ENCODE measurements at regions of chr2 and their contacts with region 1.

Region 1: DNA sequence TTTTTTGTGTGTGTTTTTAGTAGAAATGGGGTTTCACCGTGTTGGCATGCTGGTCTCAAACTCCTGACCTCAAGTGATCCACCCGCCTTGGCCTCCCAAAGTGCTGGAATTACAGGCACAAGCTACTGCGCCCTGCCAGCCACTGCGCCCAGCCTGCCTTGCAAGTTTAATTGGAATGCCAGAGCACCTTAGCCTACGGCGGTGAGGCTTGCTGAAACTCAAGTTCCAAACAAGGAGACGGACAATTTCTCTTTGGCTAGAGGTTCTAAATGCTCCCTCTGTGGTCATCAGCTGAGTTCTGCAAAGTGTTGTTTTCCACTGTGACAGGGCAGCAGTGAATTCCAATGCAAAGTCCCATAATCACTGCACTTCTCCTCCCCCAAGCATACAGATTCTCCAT is 583.4 kb downstream of the KCNJ3 start:
- DNase-seq: no peak
- H3K4me3 ChIP-seq: no peak overlapping the region
- H3K27ac ChIP-seq: no peak overlapping the region
- H3K4me1 ChIP-seq: no peaks in the 10 kb centered on the region
- H3K27me3 ChIP-seq: no peaks in the 10 kb centered on the region
- CTCF ChIP-seq: no peak
- EP300 ChIP-seq: no peak
- POLR2A ChIP-seq: no peak

Region 2: DNA sequence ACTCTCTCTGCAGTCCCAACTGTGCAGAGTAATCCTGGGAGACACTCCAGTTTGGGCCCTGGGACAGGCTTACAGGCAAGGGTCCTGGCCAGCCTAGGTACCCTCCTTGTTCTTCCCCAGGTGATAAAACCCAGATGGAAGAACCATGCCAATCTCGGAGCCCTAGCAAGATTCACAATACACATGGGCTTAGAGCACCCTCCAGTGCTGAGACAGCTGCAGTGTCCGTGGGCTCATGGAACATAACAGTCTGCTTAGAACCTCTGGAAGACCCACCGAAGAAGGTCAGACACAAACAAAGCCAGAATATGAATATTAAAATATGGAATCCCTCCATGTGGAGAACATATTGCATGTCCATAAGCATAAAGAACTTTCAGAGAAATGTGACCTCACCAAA is 15.3 kb before region 1 on chr2:
- in situ Hi-C with region 1: no loop called
- intact Hi-C with region 1: loop called (anchors 1 kb)
- DNase-seq: no peak
- H3K4me3 ChIP-seq: no peak overlapping the region
- H3K27ac ChIP-seq: no peak overlapping the region
- H3K4me1 ChIP-seq: no peaks in the 10 kb centered on the region
- H3K27me3 ChIP-seq: no peaks in the 10 kb centered on the region
- CTCF ChIP-seq: no peak
- EP300 ChIP-seq: no peak
- POLR2A ChIP-seq: no peak